Right ventricle myocardium superior (tissue), 1 donor: ENCODE measurements at regions of chr1 and their contacts with region 1.

Region 1: DNA sequence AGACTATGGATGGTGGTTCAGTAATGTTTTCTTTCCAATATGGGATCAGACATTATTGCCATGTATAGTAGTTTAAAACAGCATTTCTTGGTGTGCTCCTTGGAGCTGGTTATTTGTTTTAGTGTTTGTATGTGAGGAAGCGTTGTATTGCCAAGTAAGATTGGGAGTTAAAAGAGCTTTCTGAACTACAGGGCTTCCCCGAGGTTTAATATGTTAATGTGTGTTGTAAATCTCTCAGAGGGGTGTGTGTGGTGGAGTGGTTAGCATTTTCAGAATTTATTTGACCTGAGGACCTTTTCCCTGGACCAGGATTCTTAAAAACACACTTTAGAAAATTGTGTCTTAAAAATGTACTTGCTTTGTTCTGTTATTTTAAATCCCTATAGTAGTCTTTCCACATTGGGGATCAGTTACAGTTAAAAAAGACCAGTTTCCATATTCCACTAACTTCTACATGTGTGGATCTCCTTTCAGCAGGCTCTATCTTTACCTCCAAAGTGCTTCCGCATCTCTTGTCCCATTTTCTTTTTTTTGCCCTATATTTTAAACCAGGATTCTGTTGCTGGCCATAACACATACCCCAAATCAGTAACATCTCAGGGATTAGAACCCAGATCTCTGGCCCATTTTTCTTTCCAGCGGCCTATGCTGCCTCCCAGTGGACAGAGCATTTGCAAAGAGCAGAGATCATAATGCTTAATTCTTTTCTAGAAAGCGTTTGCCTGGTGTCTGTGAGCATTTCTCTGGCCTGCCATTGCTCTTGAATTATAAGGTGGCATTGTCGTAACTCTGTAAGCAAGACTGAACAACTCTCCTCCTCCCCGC is 58.6 kb downstream of the PBX1 start:
- DNase-seq: no peak
- ATAC-seq: no peak

Region 2: GRCh38 chr1:164559342-164560051 is 58.1 kb before region 1 on chr1:
- intact Hi-C with region 1: loop called (anchors 10 kb)
- DNase-seq: peak; percentile 61
- ATAC-seq: peak; percentile 28

Region 3: GRCh38 chr1:164576291-164577271 is 41.0 kb before region 1 on chr1:
- intact Hi-C with region 1: no loop called
- DNase-seq: peak; percentile 65
- ATAC-seq: peak; percentile 76